ENCODE measurements at regions of chr4 and their contacts with region 1.

Region 1: DNA sequence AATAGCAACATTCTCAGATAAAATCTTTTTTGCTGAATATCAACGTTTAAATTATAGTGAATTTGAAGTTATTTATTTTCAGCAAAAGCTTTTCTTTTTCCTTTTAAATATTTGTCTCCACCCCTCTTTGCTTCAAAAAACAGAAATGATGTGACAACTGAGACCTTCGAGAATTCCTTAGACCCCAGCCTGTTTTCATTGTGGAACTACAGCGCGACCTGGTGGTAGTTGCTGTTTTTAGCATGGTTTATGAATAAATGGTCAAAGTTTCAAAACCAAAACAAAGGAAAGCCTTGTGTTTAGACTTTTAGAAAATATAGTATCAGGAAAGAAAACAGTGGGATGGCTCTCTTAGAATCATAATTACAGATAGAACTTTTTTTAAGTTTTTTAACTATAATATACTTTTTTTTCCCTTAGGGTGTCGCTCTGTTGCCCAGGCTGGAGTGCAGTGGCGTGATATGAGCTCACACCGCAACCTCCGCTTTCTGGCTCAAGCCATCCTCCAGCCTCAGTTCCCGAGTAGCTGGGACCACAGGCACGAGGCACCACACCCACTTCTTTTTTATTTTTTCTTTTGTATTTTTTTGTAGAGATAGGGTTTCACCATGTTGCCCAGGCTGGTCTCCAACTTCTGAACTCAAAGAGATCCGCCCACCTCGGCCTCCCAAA is 26.8 kb upstream of the TMEM184C start:
- DNase-seq: peak; percentile 32 to 52
- ATAC-seq: peak in 1 of 2 experiments; percentile 81; a peak in 3 of 6 replicates
- H3K4me3 ChIP-seq: no peak overlapping the region
- H3K27ac ChIP-seq: no peak overlapping the region
- H3K4me1 ChIP-seq: peaks cover 7% of the 10 kb centered on the region; the same call in 1 of the 3 replicates
- CTCF ChIP-seq: peak; percentile 75
- EP300 ChIP-seq: no peak
- POLR2A ChIP-seq: no peak
- RAD21 ChIP-seq: peak; percentile 87 to 89

Region 2: DNA sequence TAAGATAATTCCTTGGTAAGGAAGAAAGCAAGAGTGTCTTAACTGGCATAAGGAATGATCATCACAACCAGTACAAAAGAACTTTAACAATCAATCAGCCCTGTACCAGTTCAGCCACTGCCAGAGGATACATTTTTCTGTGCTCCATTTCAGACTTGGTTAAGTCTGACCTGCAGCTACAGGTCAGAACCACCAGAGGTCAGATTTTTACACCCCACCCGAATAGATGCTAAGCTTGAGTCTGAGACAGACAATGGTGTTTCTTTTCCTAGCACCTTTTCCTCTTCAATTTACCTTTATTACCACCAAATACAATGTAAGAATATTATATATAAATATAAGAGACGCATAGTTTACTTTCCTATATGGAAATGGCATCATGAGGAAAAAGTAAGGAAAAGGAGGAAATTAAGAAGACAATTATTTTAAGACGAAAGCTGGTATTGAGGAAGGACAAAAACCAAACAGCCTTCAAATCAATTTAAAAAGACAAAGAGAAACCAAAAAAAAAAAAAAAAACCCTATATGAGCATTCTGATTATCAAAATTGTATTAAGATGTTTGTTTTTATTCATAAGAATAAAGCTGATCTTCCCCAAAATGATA is 429.4 kb before region 1 on chr4:
- CTCF ChIA-PET with region 1: interaction called, 13 read pairs
- POLR2A ChIA-PET with region 1: no interaction called
- DNase-seq: peak; percentile 49 to 51
- ATAC-seq: peak; percentile 65 to 72; a peak in 4 of 6 replicates
- H3K4me3 ChIP-seq: no peak overlapping the region
- H3K27ac ChIP-seq: no peak overlapping the region
- H3K4me1 ChIP-seq: peaks cover 5% of the 10 kb centered on the region; the same call in 1 of the 3 replicates
- CTCF ChIP-seq: peak; percentile 66
- EP300 ChIP-seq: no peak
- POLR2A ChIP-seq: no peak
- RAD21 ChIP-seq: peak; percentile 72 to 73

Region 3: GRCh38 chr4:147173797-147174432 is 416.5 kb before region 1 on chr4:
- CTCF ChIA-PET with region 1: interaction called, 11 read pairs
- POLR2A ChIA-PET with region 1: no interaction called
- DNase-seq: no peak
- ATAC-seq: no peak
- H3K4me3 ChIP-seq: no peak overlapping the region
- H3K27ac ChIP-seq: no peak overlapping the region
- H3K4me1 ChIP-seq: no peaks in the 10 kb centered on the region
- CTCF ChIP-seq: no peak
- EP300 ChIP-seq: no peak
- POLR2A ChIP-seq: no peak
- RAD21 ChIP-seq: no peak

Region 4: DNA sequence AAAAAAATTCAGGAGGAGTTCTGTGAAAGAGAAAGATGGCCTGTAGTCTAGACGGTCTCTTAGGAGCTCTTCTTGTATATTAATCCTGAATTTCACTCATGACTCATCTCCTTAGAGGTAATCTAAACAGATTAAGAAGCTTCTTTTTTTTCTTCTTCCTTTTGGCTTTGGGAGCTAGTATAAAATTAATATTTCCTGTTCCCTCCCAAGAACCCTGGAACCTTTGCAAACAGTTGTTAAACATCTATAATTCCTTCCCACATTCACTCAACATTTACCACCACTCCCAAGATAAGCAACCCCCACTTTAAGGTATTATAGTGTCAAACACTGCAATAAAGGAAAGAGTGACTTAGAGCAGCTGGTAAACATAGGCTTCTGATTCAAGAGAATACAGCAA is 255.9 kb before region 1 on chr4:
- CTCF ChIA-PET with region 1: no interaction called
- POLR2A ChIA-PET with region 1: no interaction called
- DNase-seq: peak in 1 of 2 experiments; percentile 4
- ATAC-seq: no peak
- H3K4me3 ChIP-seq: no peak overlapping the region
- H3K27ac ChIP-seq: no peak overlapping the region
- H3K4me1 ChIP-seq: no peaks in the 10 kb centered on the region
- CTCF ChIP-seq: no peak
- EP300 ChIP-seq: no peak
- POLR2A ChIP-seq: no peak
- RAD21 ChIP-seq: no peak

Region 5: DNA sequence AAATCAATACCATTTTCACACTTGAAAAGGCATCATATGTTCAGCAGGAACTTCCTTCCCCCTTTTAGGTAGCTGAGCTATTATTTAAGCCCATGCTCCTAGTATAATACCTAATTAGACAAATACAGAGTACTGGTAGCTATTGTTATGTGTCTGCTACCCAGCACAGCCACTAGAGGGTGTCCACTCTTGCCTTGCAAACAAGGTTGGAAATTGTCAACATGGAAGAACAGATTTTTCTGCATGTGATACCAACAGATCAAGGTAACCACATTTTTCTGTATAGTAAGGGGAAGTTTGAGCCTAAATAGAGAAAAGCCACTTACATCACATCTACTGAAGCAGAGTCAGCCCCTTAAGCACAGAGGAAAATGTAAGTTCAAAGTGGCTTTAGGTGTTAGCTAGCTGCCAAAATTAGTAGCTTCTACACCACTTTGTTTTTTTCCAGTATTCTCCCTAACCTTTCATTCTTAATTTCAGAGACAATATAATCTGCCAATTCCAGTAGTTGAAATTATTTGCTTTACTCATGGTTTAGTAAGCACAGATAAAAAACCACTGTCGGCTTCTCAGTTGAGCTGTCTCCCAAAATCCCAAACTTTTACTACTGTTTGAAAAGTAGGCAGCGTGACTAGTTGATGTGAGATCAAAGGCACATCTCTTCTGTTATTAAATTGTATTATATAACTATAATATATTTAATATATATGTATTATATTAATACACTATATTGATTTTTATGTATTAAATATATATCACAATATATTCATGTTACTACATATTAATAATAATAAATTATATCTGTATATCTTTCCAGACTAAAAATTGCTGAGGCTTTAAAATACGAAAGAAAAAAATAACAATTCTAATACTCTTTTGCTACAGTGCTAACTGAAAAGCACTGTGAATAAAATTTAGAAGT is 71.3 kb before region 1 on chr4:
- CTCF ChIA-PET with region 1: interaction called, 33 read pairs
- POLR2A ChIA-PET with region 1: no interaction called
- DNase-seq: peak; percentile 23 to 67
- ATAC-seq: peak; percentile 78 to 88; a peak in 4 of 6 replicates
- H3K4me3 ChIP-seq: no peak overlapping the region
- H3K27ac ChIP-seq: no peak overlapping the region
- H3K4me1 ChIP-seq: no peaks in the 10 kb centered on the region
- CTCF ChIP-seq: peak; percentile 73
- EP300 ChIP-seq: no peak
- POLR2A ChIP-seq: no peak
- RAD21 ChIP-seq: peak; percentile 69 to 74

Region 6: GRCh38 chr4:147578051-147578476 is 12.3 kb before region 1 on chr4:
- CTCF ChIA-PET with region 1: interaction called, 13 read pairs
- POLR2A ChIA-PET with region 1: no interaction called
- DNase-seq: peak; percentile 77 to 84
- ATAC-seq: peak; percentile 97 to 100
- H3K4me3 ChIP-seq: no peak overlapping the region
- H3K27ac ChIP-seq: peak overlapping the region; percentile 55 to 80; a peak in 5 of 6 replicates
- H3K4me1 ChIP-seq: peaks cover 26% of the 10 kb centered on the region
- CTCF ChIP-seq: no peak
- EP300 ChIP-seq: no peak
- POLR2A ChIP-seq: no peak
- RAD21 ChIP-seq: no peak

Region 7: DNA sequence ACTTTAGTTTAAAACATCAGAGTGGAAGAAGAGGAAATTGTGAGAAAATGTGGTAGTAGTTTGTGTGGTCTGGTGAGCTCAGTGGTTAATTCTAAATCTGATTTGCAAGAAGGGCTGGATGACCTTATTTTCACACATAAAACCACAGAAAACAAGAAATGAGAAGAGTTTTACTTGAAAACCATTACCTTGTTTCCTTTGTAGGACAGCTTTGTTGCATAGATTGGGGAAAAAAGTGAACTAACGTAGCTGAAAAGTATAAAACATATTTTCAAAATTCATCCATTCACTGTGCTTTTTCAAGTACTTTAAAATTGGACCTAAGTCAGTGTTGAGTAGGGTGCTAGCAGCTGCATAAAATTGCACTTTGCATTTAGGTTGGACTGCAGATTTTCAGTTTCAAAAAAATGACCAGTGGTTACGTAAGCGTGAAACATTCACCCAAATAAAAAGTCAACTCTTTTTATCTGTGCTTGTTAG is 352.8 kb after region 1 on chr4:
- CTCF ChIA-PET with region 1: no interaction called
- POLR2A ChIA-PET with region 1: no interaction called
- DNase-seq: no peak
- ATAC-seq: no peak
- H3K4me3 ChIP-seq: no peak overlapping the region
- H3K27ac ChIP-seq: no peak overlapping the region
- H3K4me1 ChIP-seq: no peaks in the 10 kb centered on the region
- CTCF ChIP-seq: no peak
- EP300 ChIP-seq: no peak
- POLR2A ChIP-seq: no peak
- RAD21 ChIP-seq: no peak

Measured in A549 (cell line).